GM12878 (cell line): ENCODE measurements at regions of chr3 and their contacts with region 1.

Region 1: DNA sequence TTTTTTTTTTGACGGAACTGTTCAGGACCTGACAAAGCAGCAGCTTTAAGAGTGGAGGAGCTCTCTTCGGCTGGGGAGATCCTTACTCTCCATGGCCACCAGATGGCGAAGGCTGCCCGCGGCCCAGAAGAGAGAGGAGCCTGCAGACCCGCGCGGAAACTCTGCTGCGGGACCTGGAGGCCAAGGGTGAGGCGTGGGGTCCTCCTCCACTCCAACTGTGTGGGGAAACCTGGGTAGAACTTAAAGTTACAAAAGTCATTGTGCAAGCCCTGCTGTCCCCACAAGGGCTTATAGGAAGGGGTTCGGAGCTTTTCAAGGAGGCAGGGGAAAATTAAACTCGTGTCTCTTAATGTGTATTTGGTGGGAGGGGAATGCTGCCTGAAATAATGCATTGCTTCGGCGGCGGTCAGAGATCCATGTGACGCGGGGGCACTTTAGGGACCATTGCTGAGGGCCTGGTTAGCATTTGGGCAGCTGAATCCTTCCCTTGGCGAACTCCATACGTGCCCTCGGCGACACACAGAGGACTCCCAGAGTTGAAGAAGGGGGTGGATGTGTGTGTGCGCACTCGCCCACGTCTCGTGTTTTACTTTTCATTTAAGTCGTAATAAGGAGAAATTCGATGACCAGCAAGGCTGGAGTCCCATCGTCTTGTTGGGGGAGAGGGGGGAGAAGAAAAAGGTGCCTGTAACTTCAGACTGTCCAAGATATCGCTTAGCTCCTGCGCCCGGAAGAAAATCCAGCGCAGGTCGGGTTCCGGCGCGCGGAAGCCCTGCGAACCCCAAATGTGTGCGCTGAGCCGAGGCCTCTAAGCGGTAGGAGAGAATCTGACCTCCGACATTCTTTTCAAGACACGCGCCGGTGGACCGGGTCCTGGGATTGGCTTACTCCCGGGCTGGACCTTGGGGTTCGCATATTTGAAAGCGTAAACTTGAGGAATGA is 9.7 kb downstream of the EOMES start:
- DNase-seq: no peak
- ATAC-seq: peak; percentile 86
- H3K4me3 ChIP-seq: peak overlapping the region; percentile 71
- H3K27ac ChIP-seq: no peak overlapping the region
- H3K4me1 ChIP-seq: no peaks in the 10 kb centered on the region
- H3K27me3 ChIP-seq: peaks cover 2 to 24% of the 10 kb centered on the region in 2 experiments
- CTCF ChIP-seq: peak; percentile 69 to 88 (median 84)
- EP300 ChIP-seq: no peak; a peak in 1 of 4 replicates
- POLR2A ChIP-seq: no peak
- RAD21 ChIP-seq: peak; percentile 87

Region 2: GRCh38 chr3:27686642-27687041 is 25.8 kb before region 1 on chr3:
- CTCF ChIA-PET with region 1: interaction called, 24 read pairs
- POLR2A ChIA-PET with region 1: interaction called, 3 read pairs
- RAD21 ChIA-PET with region 1: interaction called, 10 read pairs
- SMC1A ChIA-PET with region 1: interaction called, 15 read pairs
- in situ Hi-C with region 1: no loop called
- intact Hi-C with region 1: no loop called
- DNase-seq: no peak
- ATAC-seq: no peak
- H3K4me3 ChIP-seq: no peak overlapping the region
- H3K27ac ChIP-seq: no peak overlapping the region
- H3K4me1 ChIP-seq: no peaks in the 10 kb centered on the region
- H3K27me3 ChIP-seq: no peaks in the 10 kb centered on the region; a peak in 1 of 4 replicates
- CTCF ChIP-seq: no peak
- EP300 ChIP-seq: no peak
- POLR2A ChIP-seq: no peak
- RAD21 ChIP-seq: no peak

Region 3: DNA sequence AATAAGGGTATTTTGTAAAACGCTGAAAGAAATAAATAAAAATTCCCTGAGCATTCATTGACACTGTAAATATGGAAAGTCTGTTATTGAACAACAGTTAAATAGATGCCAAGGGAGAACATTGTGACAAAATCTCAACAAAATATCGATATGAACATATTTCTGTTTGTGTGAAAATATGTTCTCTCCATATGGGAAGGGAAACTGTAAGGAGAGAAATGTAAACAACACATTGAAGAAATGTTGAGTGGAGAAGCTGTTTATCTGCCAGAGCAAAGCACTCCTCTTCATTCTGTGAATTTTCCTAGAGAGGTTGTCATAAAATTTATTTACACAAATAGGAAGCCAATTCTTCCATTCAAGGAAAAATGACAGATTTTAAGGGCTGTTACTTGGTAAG is 66.8 kb after region 1 on chr3:
- CTCF ChIA-PET with region 1: no interaction called
- POLR2A ChIA-PET with region 1: no interaction called
- RAD21 ChIA-PET with region 1: no interaction called
- SMC1A ChIA-PET with region 1: no interaction called
- in situ Hi-C with region 1: no loop called
- intact Hi-C with region 1: no loop called
- DNase-seq: no peak
- ATAC-seq: no peak
- H3K4me3 ChIP-seq: no peak overlapping the region
- H3K27ac ChIP-seq: no peak overlapping the region
- H3K4me1 ChIP-seq: no peaks in the 10 kb centered on the region
- H3K27me3 ChIP-seq: no peaks in the 10 kb centered on the region
- CTCF ChIP-seq: no peak
- EP300 ChIP-seq: no peak
- POLR2A ChIP-seq: no peak
- RAD21 ChIP-seq: no peak

Region 4: DNA sequence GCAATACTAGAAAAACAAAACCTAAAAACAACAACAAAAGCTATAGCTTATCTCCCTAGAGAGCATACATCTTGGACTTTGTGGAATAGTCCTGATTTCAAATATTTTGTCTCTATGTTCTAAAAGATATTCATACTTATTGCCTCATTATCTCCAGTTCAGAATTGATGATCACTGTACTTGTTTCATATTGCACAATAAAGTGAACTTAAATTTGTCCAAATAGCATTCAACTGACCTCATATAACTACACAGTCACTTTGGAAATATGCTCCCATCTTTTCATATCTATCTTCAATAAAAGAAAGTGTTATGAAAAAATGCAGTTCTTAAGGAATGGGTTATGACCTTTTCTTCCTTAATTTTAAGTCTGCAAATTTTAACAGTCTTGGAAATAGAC is 300.4 kb after region 1 on chr3:
- CTCF ChIA-PET with region 1: interaction called, 26 read pairs
- POLR2A ChIA-PET with region 1: interaction called, 4 read pairs
- RAD21 ChIA-PET with region 1: interaction called, 141 read pairs
- SMC1A ChIA-PET with region 1: interaction called, 26 read pairs
- in situ Hi-C with region 1: no loop called
- intact Hi-C with region 1: no loop called
- DNase-seq: no peak
- ATAC-seq: no peak
- H3K4me3 ChIP-seq: no peak overlapping the region
- H3K27ac ChIP-seq: no peak overlapping the region
- H3K4me1 ChIP-seq: no peaks in the 10 kb centered on the region
- H3K27me3 ChIP-seq: no peaks in the 10 kb centered on the region
- CTCF ChIP-seq: no peak
- EP300 ChIP-seq: no peak
- POLR2A ChIP-seq: no peak
- RAD21 ChIP-seq: no peak

Region 5: DNA sequence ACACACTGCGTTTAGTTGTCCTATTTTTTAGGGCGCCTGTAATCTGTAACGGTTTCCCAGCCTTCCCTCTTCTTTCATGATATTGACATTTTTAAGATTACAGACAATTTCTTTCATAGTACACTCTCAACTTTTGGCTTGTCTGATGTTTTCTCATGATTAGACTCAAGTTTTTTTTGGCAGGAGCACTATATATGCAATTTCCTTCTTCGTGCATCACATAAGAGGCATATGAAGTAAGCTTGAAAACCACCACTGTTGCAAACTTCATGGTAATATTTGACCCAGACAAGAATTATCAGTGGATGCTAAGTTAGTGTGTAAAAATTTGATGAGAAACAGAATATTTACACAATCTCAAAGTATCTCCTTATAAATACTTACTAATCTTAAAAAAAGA is 409.8 kb after region 1 on chr3:
- CTCF ChIA-PET with region 1: interaction called, 4 read pairs
- POLR2A ChIA-PET with region 1: interaction called, 4 read pairs
- RAD21 ChIA-PET with region 1: interaction called, 9 read pairs
- SMC1A ChIA-PET with region 1: interaction called, 3 read pairs
- in situ Hi-C with region 1: no loop called
- intact Hi-C with region 1: loop called (anchors 5 kb)
- DNase-seq: no peak
- ATAC-seq: no peak
- H3K4me3 ChIP-seq: no peak overlapping the region
- H3K27ac ChIP-seq: no peak overlapping the region
- H3K4me1 ChIP-seq: no peaks in the 10 kb centered on the region
- H3K27me3 ChIP-seq: no peaks in the 10 kb centered on the region
- CTCF ChIP-seq: no peak
- EP300 ChIP-seq: no peak
- POLR2A ChIP-seq: no peak
- RAD21 ChIP-seq: no peak

Region 6: DNA sequence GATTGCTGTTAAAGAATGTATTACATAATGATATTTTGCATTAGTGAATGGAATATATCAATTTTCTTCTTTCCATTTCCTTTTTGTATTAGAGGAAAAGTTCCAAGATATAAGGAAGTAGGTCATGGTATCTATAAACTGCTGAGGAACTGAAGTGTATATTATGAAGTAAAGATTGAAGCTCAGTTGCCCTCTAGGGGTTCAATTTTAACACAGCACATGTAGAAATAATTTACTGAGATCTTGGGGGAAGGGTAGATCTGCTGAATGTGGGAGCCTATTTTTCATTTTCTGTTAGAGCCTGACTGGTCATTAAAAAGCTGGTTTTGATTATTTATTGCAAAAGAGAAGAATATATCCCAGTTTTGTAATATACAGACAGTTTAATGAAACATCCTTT is 574.2 kb after region 1 on chr3:
- CTCF ChIA-PET with region 1: interaction called, 33 read pairs
- POLR2A ChIA-PET with region 1: interaction called, 5 read pairs
- RAD21 ChIA-PET with region 1: interaction called, 34 read pairs
- SMC1A ChIA-PET with region 1: interaction called, 29 read pairs
- in situ Hi-C with region 1: no loop called
- intact Hi-C with region 1: loop called (anchors 1 kb)
- DNase-seq: peak; percentile 8
- ATAC-seq: peak; percentile 96
- H3K4me3 ChIP-seq: no peak overlapping the region
- H3K27ac ChIP-seq: no peak overlapping the region
- H3K4me1 ChIP-seq: no peaks in the 10 kb centered on the region
- H3K27me3 ChIP-seq: no peaks in the 10 kb centered on the region
- CTCF ChIP-seq: peak; percentile 48 to 63 (median 50); a peak in 5 of 6 replicates
- EP300 ChIP-seq: no peak
- POLR2A ChIP-seq: no peak
- RAD21 ChIP-seq: peak; percentile 73

Region 7: GRCh38 chr3:28334552-28334951 is 622.1 kb after region 1 on chr3:
- CTCF ChIA-PET with region 1: interaction called, 140 read pairs
- POLR2A ChIA-PET with region 1: no interaction called
- RAD21 ChIA-PET with region 1: interaction called, 186 read pairs
- SMC1A ChIA-PET with region 1: interaction called, 139 read pairs
- in situ Hi-C with region 1: loop called (anchors 5 kb)
- intact Hi-C with region 1: no loop called
- DNase-seq: no peak
- ATAC-seq: peak; percentile 37; the same call in 2 of the 3 replicates
- H3K4me3 ChIP-seq: no peak overlapping the region
- H3K27ac ChIP-seq: no peak overlapping the region
- H3K4me1 ChIP-seq: no peaks in the 10 kb centered on the region
- H3K27me3 ChIP-seq: no peaks in the 10 kb centered on the region
- CTCF ChIP-seq: no peak; a peak in 1 of 6 replicates
- EP300 ChIP-seq: no peak
- POLR2A ChIP-seq: no peak
- RAD21 ChIP-seq: no peak